Right cardiac atrium (tissue), 5 donors: ENCODE measurements at regions of chr4 and their contacts with region 1.

Region 1: GRCh38 chr4:3442959-3443749 is 1.4 kb downstream of the HGFAC start:
- DNase-seq: peak; percentile 57 to 84 (median 81)
- ATAC-seq: peak; percentile 35 to 60
- H3K4me3 ChIP-seq: no peak overlapping the region
- H3K27ac ChIP-seq: no peak overlapping the region
- H3K4me1 ChIP-seq: no peaks in the 10 kb centered on the region
- H3K27me3 ChIP-seq: no peaks in the 10 kb centered on the region

Region 2: DNA sequence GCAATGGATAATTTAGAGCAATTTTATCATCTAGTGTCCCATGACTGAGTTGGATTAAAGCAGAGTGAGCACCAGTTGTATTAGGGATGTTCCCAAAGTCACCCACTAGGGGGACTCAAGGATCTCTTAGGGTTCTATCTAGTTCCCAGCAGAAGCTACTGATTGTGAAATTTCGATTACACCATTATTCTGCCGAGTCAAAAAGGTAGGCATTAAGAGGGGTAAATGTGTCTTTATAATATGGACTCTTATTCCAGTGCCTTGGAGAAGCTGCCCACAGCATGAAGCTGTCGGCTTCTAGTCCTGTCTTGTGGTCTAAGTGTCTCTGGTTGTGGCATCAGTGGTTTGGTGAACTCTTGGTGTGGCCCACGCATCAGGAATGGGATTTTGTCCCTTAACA is 97.0 kb before region 1 on chr4:
- intact Hi-C with region 1: loop called (anchors 2 to 5 kb)
- DNase-seq: no peak
- ATAC-seq: peak; percentile 90 to 91
- H3K4me3 ChIP-seq: no peak overlapping the region
- H3K27ac ChIP-seq: no peak overlapping the region
- H3K4me1 ChIP-seq: no peaks in the 10 kb centered on the region
- H3K27me3 ChIP-seq: no peaks in the 10 kb centered on the region